ENCODE measurements at regions of chr15 and their contacts with region 1.

Region 1: GRCh38 chr15:71660501-71660900 is 149.9 kb upstream of the NR2E3 start:
- DNase-seq: no peak
- ATAC-seq: no peak
- H3K4me3 ChIP-seq: no peak overlapping the region
- H3K27ac ChIP-seq: no peak overlapping the region
- H3K4me1 ChIP-seq: peaks cover 0 to 1% of the 10 kb centered on the region in 2 donors
- H3K27me3 ChIP-seq: no peaks in the 10 kb centered on the region

Region 2: DNA sequence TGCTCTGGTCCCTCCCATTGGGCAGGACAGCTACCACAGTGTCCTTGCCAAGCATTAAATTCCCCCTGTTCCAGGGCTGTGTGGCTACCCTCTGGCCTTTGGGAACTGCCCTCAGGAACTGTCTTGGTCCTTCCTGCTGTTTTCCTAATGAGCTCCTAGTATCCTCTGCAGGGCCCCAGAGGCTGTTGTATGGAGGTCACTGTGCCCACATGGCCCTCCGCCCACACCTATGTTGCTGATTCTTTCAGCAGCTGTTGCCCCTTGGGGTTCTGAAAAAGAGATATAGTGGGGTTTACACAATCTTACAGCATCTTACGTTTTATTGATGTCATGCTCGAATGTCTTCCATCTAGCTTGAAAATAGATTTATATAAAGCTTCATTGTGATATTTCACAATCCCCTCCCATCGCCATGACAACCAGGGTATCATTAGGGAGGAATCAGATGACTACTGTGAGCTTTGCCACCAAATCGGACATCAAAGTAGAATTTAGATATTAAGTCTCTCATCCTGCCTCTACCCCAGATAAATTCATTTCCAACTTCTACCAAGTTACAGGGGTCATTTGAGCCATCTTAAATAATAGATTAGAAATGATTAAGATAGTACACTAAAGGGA is 52.8 kb after region 1 on chr15:
- intact Hi-C with region 1: loop called in 1 of 2 experiments (anchors 5 kb)
- DNase-seq: no peak
- ATAC-seq: no peak
- H3K4me3 ChIP-seq: no peak overlapping the region
- H3K27ac ChIP-seq: no peak overlapping the region
- H3K4me1 ChIP-seq: peaks cover 0 to 8% of the 10 kb centered on the region in 2 donors
- H3K27me3 ChIP-seq: no peaks in the 10 kb centered on the region